ENCODE measurements at regions of chr1 and their contacts with region 1.

Region 1: DNA sequence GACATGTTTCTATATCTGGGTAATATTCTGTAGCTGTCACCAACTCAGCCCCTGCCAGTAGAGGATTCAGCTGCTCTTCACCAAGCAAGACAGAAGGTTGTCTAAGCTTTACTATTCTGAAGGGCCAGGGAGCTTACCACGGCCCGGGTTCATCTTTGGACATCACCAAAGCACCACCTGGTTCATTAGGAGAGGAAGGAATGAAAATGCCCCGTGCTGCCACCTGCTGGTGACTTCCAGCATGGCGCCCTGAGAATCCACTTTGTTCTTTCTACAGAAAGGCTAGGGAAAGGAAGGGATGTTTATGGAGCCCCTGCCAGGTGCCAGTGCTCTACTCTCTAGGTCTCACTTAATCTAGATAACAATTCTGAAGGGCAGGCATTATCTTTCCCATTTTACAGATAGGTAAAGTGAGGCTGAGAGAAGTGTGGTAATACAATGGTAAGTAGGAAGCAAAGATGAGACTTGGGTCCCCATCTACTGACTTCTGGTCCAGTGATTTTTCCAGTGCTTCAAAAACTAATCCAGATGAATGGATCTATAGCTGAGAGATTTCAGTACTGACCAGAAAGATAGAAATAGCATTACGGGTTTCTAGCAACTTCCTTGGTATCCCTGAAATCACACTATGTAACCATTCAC is 79.5 kb downstream of the BEND5 start:
- DNase-seq: peak; percentile 21
- H3K4me3 Mint-ChIP-seq: no peak overlapping the region
- H3K27ac Mint-ChIP-seq: no peak overlapping the region
- H3K4me1 Mint-ChIP-seq: no peaks in the 10 kb centered on the region
- H3K27me3 Mint-ChIP-seq: peaks cover 8% of the 10 kb centered on the region

Region 2: DNA sequence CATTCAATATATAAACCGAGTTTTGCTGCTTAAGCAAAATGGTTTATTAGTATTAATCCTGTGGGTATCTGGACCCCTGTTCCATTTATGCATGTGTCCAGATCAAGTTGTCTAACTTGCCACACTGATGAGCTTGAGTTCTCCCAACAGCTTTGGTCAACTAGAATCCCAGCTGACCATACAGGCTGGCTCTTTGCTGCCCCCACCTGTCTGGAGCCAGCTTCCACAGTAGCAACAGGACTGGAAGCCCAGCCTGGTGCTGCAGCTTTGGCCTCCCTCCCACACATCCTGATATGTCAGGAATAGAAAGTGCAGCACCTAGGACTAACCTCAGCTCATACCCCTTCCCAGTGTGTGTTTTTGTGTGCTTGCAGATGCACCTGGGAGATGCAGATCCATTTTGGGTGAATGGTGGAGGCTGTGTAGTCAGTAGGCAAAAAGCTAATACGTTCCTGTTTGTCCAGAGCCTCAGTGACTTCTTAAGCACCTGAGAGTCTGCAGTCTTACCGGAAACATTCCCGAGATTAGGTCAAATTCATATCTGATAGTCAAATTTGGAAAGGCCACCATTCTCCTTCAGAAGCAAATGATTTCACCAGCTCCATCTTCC is 120.4 kb after region 1 on chr1:
- intact Hi-C with region 1: loop called (anchors 5 kb)
- DNase-seq: no peak
- H3K4me3 Mint-ChIP-seq: no peak overlapping the region
- H3K27ac Mint-ChIP-seq: no peak overlapping the region
- H3K4me1 Mint-ChIP-seq: no peaks in the 10 kb centered on the region
- H3K27me3 Mint-ChIP-seq: peaks cover 17% of the 10 kb centered on the region